Activated CD4-positive, alpha-beta T cell treated with anti-CD3 and anti-CD28 coated beads, Interleukin-2, amount 10 ng/mL, durations not matched to agents 24 days and 14 days (primary cell): ENCODE measurements at regions of chr19 and their contacts with region 1.

Region 1: DNA sequence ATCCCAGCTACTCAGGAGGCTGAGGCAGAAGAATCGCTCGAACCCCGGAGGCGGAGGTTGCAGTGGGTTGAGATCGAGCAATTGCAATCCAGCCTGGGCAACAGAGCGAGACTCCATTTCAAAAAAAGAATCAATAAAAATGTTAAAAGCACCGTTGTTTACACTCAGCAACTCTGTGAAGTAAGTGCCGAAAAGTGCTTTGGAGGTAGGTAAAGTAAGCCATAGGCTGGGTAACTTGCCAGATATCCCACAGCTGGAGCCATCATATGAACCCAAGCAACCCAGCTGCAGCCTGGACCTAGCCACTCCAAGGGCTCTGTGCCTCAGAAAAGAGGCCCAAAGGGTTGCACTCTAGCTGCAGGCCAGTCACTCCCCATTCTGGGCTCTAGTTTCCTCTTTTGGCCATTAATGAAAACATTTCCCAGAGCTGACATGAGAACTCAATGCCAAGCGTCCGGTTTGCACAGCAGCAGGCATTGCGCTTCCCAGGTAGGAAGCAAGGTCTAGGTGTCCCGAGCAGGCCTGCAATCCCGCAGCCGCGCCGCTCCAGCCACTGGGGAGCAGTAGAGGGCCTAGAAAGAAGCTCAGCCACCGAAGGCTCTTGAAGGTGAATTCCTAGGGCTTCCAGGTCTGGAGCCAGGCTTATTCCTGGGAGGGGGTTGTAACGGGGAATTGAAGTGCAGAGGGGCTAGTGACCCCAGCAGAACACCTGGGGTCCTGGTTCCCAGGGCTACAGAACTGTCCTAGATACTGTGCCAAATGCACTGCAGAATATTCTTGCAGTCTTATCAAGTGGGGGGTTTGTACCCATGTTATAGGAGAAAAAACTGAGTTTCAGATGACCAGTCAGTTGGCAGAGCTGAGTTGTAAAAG is 4.1 kb upstream of the CD79A start:
- DNase-seq: peak; percentile 90
- H3K4me3 Mint-ChIP-seq: peak overlapping the region; percentile 59
- H3K27ac Mint-ChIP-seq: peak overlapping the region; percentile 83
- H3K4me1 Mint-ChIP-seq: peaks cover 74% of the 10 kb centered on the region
- H3K27me3 Mint-ChIP-seq: no peaks in the 10 kb centered on the region

Region 2: DNA sequence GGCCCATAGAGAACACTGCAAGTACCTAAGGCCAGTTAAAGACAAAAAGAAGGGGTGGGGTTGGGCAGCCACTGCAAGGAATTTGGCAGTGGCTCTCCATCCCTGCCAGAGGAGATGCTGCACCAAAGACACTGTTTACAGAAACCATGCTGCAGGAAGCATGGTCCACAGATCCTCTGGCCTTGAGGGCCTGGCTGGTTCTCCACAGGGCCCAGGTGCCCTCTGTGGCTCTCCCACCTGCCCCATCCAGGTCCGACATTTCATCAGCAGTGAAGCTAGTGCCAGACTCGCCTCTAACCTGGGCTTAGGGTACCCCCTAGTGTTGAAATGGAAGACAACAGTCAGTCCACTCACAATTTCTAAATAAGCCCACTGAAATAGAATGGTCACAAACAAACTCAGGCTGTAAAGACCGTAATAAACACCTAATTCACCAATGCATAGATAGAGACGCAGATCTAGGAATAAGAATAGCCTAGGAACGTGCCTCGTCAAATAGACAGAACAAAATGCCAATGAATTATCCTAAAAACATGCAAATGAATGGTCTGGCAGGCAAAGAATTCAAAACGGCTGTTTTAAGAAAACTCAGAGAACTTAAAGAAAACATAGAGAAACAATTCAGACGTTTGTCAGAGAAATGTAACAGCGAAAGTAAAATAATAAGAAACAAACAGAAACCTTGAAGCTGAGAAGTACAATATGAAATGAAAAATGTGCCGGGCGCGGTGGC is 51.8 kb before region 1 on chr19:
- intact Hi-C with region 1: no loop called
- DNase-seq: peak; percentile 90
- H3K4me3 Mint-ChIP-seq: no peak overlapping the region
- H3K27ac Mint-ChIP-seq: no peak overlapping the region
- H3K4me1 Mint-ChIP-seq: no peaks in the 10 kb centered on the region
- H3K27me3 Mint-ChIP-seq: peaks cover 35% of the 10 kb centered on the region

Region 3: DNA sequence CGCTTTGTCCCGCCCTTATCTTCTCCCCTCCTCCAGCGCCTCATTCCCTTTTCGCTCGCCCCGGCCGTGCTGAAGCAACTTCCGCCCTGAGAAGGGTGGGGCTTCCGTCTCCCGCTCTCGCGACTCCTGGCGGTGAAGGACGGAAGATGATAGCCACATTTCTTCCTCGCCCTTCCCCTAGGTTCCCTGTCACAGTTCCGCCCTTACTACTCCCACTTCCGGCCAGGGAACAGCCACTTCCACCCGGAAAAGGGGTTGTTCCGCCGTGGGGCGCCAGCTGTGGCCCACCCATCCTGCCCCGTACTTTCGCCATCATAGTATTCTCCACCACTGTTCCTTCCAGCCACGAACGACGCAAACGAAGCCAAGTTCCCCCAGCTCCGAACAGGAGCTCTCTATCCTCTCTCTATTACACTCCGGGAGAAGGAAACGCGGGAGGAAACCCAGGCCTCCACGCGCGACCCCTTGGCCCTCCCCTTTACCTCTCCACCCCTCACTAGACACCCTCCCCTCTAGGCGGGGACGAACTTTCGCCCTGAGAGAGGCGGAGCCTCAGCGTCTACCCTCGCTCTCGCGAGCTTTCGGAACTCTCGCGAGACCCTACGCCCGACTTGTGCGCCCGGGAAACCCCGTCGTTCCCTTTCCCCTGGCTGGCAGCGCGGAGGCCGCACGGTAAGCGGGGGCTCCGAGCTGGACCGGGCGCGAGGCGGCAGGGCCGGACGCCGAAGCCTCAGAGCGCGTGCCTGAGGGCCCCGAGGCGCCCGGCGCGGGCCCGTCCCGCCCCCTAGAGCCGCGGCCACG is 13.2 kb before region 1 on chr19 and contains the start of gene RPS19:
- intact Hi-C with region 1: loop called (anchors 1 kb)
- DNase-seq: peak; percentile 100
- H3K4me3 Mint-ChIP-seq: peak within 1 kb of the TSS; percentile 89
- H3K27ac Mint-ChIP-seq: peak within 1 kb of the TSS; percentile 98
- H3K4me1 Mint-ChIP-seq: peaks cover 44% of the 10 kb centered on the region
- H3K27me3 Mint-ChIP-seq: peaks cover 8% of the 10 kb centered on the region
- total RNA-seq, gene RPS19: 2,909 and 2,931 TPM in 2 replicates

Region 4: GRCh38 chr19:41934849-41935374 is 61.9 kb after region 1 on chr19:
- intact Hi-C with region 1: loop called (anchors 1 kb)
- DNase-seq: peak; percentile 94
- H3K4me3 Mint-ChIP-seq: peak overlapping the region; percentile 12
- H3K27ac Mint-ChIP-seq: peak overlapping the region; percentile 70
- H3K4me1 Mint-ChIP-seq: peaks cover 40% of the 10 kb centered on the region
- H3K27me3 Mint-ChIP-seq: peaks cover 22% of the 10 kb centered on the region

Region 5: GRCh38 chr19:41945135-41945766 is 72.2 kb after region 1 on chr19:
- intact Hi-C with region 1: loop called (anchors 1 kb)
- DNase-seq: peak; percentile 90
- H3K4me3 Mint-ChIP-seq: peak overlapping the region; percentile 76
- H3K27ac Mint-ChIP-seq: peak overlapping the region; percentile 99
- H3K4me1 Mint-ChIP-seq: peaks cover 49% of the 10 kb centered on the region
- H3K27me3 Mint-ChIP-seq: peaks cover 9% of the 10 kb centered on the region

Region 6: GRCh38 chr19:41951686-41952172 is 78.7 kb after region 1 on chr19:
- intact Hi-C with region 1: loop called (anchors 1 kb)
- DNase-seq: peak; percentile 96
- H3K4me3 Mint-ChIP-seq: peak overlapping the region; percentile 49
- H3K27ac Mint-ChIP-seq: peak overlapping the region; percentile 78
- H3K4me1 Mint-ChIP-seq: peaks cover 21% of the 10 kb centered on the region
- H3K27me3 Mint-ChIP-seq: no peaks in the 10 kb centered on the region

Region 7: GRCh38 chr19:42352301-42353259 is 479.6 kb after region 1 on chr19:
- intact Hi-C with region 1: no loop called
- DNase-seq: peak; percentile 66
- H3K4me3 Mint-ChIP-seq: no peak overlapping the region
- H3K27ac Mint-ChIP-seq: no peak overlapping the region
- H3K4me1 Mint-ChIP-seq: no peaks in the 10 kb centered on the region
- H3K27me3 Mint-ChIP-seq: no peaks in the 10 kb centered on the region